Ovary (tissue), 10 donors: ENCODE measurements at regions of chr3 and their contacts with region 1.

Region 1: GRCh38 chr3:147008886-147009285 is 397.5 kb downstream of the ZIC4 start:
- DNase-seq: no peak
- H3K4me3 ChIP-seq: no peak overlapping the region
- H3K27ac ChIP-seq: no peak overlapping the region
- H3K4me1 ChIP-seq: no peaks in the 10 kb centered on the region
- H3K27me3 ChIP-seq: no peaks in the 10 kb centered on the region
- CTCF ChIP-seq: no peak
- EP300 ChIP-seq: no peak
- POLR2A ChIP-seq: no peak

Region 2: DNA sequence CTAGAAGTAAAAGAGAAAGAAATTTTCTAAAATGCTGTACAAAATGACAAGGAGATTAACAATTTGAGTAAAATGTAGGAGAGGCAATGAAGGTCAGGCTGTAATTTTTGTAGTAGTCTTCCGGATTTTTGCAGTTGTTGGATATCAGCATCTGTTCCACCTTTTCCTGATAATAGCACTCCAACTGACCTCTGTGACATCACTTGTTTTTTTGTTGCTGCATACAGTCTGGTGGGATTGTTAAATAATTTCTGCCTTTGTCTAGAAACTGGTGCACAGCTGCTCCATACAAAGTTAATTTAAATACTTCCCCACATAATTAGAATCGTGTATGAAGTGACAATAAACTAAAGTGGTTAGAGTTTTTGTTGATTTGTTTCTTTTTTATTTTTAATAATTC is 1579.3 kb before region 1 on chr3:
- intact Hi-C with region 1: loop called in 1 of 4 experiments (anchors 5 kb)
- DNase-seq: no peak
- H3K4me3 ChIP-seq: no peak overlapping the region
- H3K27ac ChIP-seq: no peak overlapping the region
- H3K4me1 ChIP-seq: no peaks in the 10 kb centered on the region
- H3K27me3 ChIP-seq: no peaks in the 10 kb centered on the region
- CTCF ChIP-seq: no peak
- EP300 ChIP-seq: no peak
- POLR2A ChIP-seq: no peak

Region 3: GRCh38 chr3:146672941-146673340 is 335.9 kb before region 1 on chr3:
- intact Hi-C with region 1: no loop called
- DNase-seq: no peak
- H3K4me3 ChIP-seq: no peak overlapping the region
- H3K27ac ChIP-seq: no peak overlapping the region
- H3K4me1 ChIP-seq: no peaks in the 10 kb centered on the region
- H3K27me3 ChIP-seq: no peaks in the 10 kb centered on the region
- CTCF ChIP-seq: no peak
- EP300 ChIP-seq: no peak
- POLR2A ChIP-seq: no peak